Caco-2 (cell line): ENCODE measurements at regions of chr12 and their contacts with region 1.

Region 1: DNA sequence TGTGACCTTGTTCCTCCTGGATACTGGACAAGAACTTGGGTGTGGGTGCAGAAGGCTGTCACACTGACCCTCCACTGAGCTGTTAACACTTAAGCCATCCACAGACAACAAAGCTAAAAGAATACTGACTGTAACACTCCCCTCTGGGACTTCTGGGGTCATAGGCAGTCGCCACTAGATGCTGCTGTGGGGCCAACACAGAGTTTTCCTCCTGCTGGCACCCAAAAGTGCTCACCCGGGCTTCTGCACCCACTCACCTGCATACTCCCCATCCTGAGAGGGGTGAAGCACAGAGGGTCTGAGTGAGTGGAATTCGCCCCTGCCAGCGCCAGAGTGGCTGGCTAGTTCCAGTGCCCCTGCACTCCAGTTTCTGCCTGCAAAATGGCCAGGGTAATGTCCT is 422.4 kb upstream of the LMO3 start:
- DNase-seq: peak in 1 of 2 experiments; percentile 30
- H3K4me3 ChIP-seq: no peak overlapping the region
- H3K4me3 Mint-ChIP-seq: no peak overlapping the region
- H3K27ac Mint-ChIP-seq: no peak overlapping the region
- H3K4me1 ChIP-seq: no peaks in the 10 kb centered on the region
- H3K4me1 Mint-ChIP-seq: no peaks in the 10 kb centered on the region
- H3K27me3 ChIP-seq: no peaks in the 10 kb centered on the region
- H3K27me3 Mint-ChIP-seq: peaks cover 3% of the 10 kb centered on the region
- CTCF ChIP-seq: peak; percentile 27 to 38

Region 2: DNA sequence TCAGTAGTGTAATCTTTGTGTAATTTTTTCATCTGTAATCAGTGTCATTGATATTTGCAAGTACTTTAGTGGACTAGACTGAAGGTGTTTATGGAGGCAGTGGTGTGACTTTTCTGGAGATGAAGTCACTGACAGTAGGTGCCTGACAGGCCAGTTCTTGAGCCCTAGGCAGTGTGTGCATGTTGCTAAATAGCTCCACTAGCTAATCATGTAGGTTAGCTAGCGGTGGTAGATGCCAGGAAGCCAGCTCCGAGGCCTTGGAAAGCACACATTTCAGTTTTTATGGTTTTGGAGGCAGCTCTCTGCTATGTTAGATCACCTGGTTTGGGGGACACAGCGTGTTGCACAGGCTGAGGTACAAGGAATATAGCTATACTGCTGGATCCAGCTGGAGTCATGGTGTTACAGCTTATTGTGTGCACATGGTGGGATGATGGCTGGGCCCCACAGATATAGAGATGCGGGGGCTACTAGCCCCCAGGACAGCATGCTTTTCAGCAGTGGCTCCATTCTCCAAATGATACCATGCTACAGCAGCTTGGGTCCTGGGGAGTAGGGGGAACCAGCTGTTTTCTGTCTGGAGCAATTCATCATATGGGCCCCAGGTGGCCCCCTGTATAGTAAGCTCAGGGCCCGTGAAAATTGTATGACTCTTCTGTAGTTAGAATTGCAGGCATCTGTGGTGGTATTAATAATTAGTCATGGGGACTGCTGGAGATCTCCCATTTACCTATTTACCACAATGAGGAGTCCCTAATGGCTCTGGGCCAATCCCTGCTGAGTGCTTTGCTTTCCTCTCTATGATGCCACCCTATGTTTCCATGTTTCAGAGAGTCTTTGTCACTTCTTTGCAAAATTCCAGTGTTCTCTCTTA is 55.2 kb before region 1 on chr12:
- CTCF ChIA-PET with region 1: no interaction called
- POLR2A ChIA-PET with region 1: no interaction called
- intact Hi-C with region 1: no loop called
- DNase-seq: no peak
- H3K4me3 ChIP-seq: no peak overlapping the region
- H3K4me3 Mint-ChIP-seq: no peak overlapping the region
- H3K27ac Mint-ChIP-seq: no peak overlapping the region
- H3K4me1 ChIP-seq: no peaks in the 10 kb centered on the region
- H3K4me1 Mint-ChIP-seq: no peaks in the 10 kb centered on the region
- H3K27me3 ChIP-seq: no peaks in the 10 kb centered on the region
- H3K27me3 Mint-ChIP-seq: no peaks in the 10 kb centered on the region
- CTCF ChIP-seq: no peak

Region 3: GRCh38 chr12:17056546-17056945 is 28.2 kb after region 1 on chr12:
- CTCF ChIA-PET with region 1: no interaction called
- POLR2A ChIA-PET with region 1: no interaction called
- intact Hi-C with region 1: no loop called
- DNase-seq: no peak
- H3K4me3 ChIP-seq: no peak overlapping the region
- H3K4me3 Mint-ChIP-seq: no peak overlapping the region
- H3K27ac Mint-ChIP-seq: no peak overlapping the region
- H3K4me1 ChIP-seq: peaks cover 4% of the 10 kb centered on the region; the same call in 1 of the 2 replicates
- H3K4me1 Mint-ChIP-seq: no peaks in the 10 kb centered on the region
- H3K27me3 ChIP-seq: no peaks in the 10 kb centered on the region
- H3K27me3 Mint-ChIP-seq: no peaks in the 10 kb centered on the region
- CTCF ChIP-seq: no peak

Region 4: GRCh38 chr12:17159506-17160300 is 131.4 kb after region 1 on chr12:
- CTCF ChIA-PET with region 1: interaction called, 3 read pairs
- POLR2A ChIA-PET with region 1: no interaction called
- intact Hi-C with region 1: loop called (anchors 5 kb)
- DNase-seq: no peak
- H3K4me3 ChIP-seq: no peak overlapping the region
- H3K4me3 Mint-ChIP-seq: no peak overlapping the region
- H3K27ac Mint-ChIP-seq: no peak overlapping the region
- H3K4me1 ChIP-seq: no peaks in the 10 kb centered on the region
- H3K4me1 Mint-ChIP-seq: no peaks in the 10 kb centered on the region
- H3K27me3 ChIP-seq: no peaks in the 10 kb centered on the region
- H3K27me3 Mint-ChIP-seq: no peaks in the 10 kb centered on the region
- CTCF ChIP-seq: no peak